PC-9 (cell line): ENCODE measurements at regions of chr1 and their contacts with region 1.

Region 1: DNA sequence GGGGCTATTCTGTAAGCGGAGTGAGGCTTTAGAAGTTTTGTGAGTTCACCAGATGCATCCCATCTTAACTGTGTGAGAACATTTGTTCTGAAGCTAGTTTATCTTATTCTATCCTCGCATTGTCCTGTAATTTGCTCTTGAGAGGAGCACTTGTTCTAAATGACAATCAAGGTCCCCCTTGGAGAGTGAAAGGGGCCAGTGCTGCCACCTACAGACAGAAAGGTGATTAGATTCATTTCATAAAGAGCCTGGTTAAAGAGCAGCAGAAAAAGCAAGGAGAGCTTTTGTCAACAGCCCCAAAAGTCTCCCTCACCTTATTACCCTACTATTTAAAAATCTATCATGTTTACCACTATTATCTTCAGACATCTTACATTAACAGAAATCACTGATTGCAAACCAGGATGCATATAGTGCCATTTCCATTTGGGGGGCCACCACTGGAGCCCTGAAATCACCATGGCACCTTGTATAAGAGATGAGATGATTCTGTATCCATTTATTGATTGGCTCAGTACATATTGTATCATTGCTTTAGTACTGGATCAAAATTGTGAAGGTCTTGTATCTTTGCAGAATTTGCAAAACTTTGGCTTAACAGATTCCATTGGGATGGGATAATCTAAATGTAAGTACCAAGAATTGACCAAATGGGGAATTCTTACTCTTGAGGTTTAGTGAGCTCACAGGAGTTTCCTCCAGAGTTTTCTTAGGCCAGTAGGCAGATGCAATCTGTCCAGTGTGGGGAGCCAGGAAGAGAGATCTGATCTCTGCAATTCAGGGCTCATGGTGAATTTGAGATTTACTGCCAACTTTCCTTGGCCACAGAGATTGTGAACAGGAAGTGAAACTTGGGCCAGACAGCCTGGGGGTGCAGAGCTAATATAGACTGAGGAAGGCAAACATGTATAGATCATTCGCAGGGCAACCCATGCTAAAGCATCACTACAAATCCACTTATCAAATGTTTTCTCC is 64.3 kb upstream of the TRABD2B start:
- DNase-seq: peak in 1 of 2 experiments; percentile 7
- H3K4me3 ChIP-seq: no peak overlapping the region
- H3K27ac ChIP-seq: no peak overlapping the region
- H3K4me1 ChIP-seq: no peaks in the 10 kb centered on the region
- H3K27me3 ChIP-seq: no peaks in the 10 kb centered on the region
- CTCF ChIP-seq: peak; percentile 68

Region 2: DNA sequence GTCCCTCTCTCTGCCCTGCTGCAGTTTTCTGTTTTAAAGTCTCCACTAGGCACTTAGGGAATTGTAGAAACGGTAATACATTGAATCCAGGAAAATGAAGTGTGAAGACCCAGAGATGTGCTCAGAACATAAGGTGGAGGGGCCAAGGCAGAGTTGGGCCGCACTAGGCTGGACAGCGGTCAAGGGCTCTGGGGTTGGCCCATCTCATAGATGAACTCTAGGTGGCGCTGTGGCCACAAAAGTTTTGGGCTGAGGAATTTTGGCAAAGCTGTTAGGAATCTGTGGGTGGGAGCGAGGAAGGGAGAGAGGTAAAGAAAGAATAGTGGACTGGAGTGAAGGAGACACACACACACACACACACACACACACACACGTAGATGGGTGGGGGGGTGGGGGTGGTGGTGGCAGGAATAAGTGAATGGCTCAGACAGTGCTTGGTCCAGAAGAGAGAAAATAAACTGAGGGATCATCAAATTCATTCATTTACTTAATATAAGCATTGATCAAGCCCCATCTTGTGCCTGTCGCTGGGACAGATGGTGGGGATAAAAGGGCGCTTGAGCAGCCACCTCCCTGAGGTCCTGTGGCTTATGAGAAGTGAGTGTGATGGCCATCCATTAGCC is 322.8 kb before region 1 on chr1:
- CTCF ChIA-PET with region 1: no interaction called
- POLR2A ChIA-PET with region 1: no interaction called
- intact Hi-C with region 1: loop called (anchors 2 kb)
- DNase-seq: peak in 1 of 2 experiments; percentile 29
- H3K4me3 ChIP-seq: no peak overlapping the region
- H3K27ac ChIP-seq: no peak overlapping the region
- H3K4me1 ChIP-seq: no peaks in the 10 kb centered on the region
- H3K27me3 ChIP-seq: peaks cover 26% of the 10 kb centered on the region
- CTCF ChIP-seq: peak; percentile 80

Region 3: DNA sequence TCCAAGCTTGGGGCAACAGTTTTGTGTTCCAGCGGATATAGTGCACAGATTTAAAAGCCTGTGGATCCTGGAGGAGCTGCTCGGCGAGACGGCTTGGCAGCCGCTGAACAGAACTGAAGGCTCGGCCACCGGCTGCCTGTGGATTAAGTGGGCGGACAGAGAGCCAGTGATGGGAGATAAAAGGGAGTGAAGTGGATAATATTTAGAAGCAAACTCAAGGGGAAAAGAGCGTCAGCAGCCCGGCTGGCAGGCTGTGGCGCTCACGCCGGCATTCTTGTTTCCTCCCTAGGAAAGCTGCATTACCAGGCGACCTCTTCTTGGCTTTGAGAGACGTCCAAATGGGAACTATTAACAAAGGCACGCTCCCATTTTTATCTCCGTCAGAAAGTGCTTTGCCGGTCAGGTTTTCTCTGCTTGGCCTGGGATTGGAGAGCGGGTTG is 74.7 kb before region 1 on chr1:
- CTCF ChIA-PET with region 1: no interaction called
- POLR2A ChIA-PET with region 1: no interaction called
- intact Hi-C with region 1: no loop called
- DNase-seq: no peak
- H3K4me3 ChIP-seq: no peak overlapping the region
- H3K27ac ChIP-seq: no peak overlapping the region
- H3K4me1 ChIP-seq: no peaks in the 10 kb centered on the region
- H3K27me3 ChIP-seq: 0 out of 2 replicates have a peak, but pooled peaks cover 3% of the 10 kb centered on the region
- CTCF ChIP-seq: no peak

Region 4: GRCh38 chr1:48931506-48932251 is 870.2 kb after region 1 on chr1:
- CTCF ChIA-PET with region 1: no interaction called
- POLR2A ChIA-PET with region 1: no interaction called
- intact Hi-C with region 1: no loop called
- DNase-seq: peak; percentile 2 to 52
- H3K4me3 ChIP-seq: no peak overlapping the region
- H3K27ac ChIP-seq: no peak overlapping the region
- H3K4me1 ChIP-seq: 0 out of 2 replicates have a peak, but pooled peaks cover 4% of the 10 kb centered on the region
- H3K27me3 ChIP-seq: no peaks in the 10 kb centered on the region
- CTCF ChIP-seq: no peak